CD8-positive, alpha-beta T cell (primary cell): ENCODE measurements at regions of chr3 and their contacts with region 1.

Region 1: GRCh38 chr3:58034738-58035523 is 26.7 kb downstream of the FLNB start:
- DNase-seq: peak in 7 of 9 experiments; percentile 8 to 92 (median 33)
- ATAC-seq: peak; percentile 95
- H3K4me3 ChIP-seq: no peak overlapping the region
- H3K4me3 Mint-ChIP-seq: peak overlapping the region; percentile 66
- H3K27ac ChIP-seq: peak overlapping the region; percentile 18 to 54
- H3K27ac Mint-ChIP-seq: peak overlapping the region; percentile 96
- H3K4me1 ChIP-seq: peaks cover 38% of the 10 kb centered on the region
- H3K4me1 Mint-ChIP-seq: peaks cover 62% of the 10 kb centered on the region
- H3K27me3 ChIP-seq: no peaks in the 10 kb centered on the region
- H3K27me3 Mint-ChIP-seq: no peaks in the 10 kb centered on the region
- CTCF ChIP-seq: no peak

Region 2: DNA sequence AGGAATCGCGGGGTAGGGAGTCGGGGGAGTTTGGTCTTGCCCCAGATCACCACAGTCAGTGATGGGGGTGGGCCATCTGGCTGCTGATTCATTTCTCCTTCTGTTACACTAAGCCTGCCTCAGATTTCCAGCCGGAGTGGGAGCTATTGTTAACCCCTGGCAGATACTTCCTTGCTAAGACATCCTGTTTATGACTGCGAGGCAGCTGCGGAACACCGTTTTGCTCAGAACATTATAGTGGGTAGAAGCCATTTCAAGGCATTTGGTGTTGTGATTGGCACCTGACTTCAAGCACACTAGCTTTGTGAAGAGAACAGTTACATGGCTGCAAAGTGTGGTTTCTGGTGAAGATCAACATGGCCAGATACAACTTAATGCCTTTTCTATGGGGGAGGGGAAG is 47.1 kb after region 1 on chr3:
- CTCF ChIA-PET with region 1: no interaction called
- POLR2A ChIA-PET with region 1: no interaction called
- intact Hi-C with region 1: loop called in 1 of 2 experiments (anchors 5 kb)
- DNase-seq: peak in 8 of 9 experiments; percentile 6 to 73 (median 26)
- ATAC-seq: peak; percentile 88
- H3K4me3 ChIP-seq: peak overlapping the region in 1 of 2 experiments; percentile 20
- H3K4me3 Mint-ChIP-seq: peak overlapping the region; percentile 66
- H3K27ac ChIP-seq: peak overlapping the region; percentile 22 to 32
- H3K27ac Mint-ChIP-seq: peak overlapping the region; percentile 92
- H3K4me1 ChIP-seq: peaks cover 65% of the 10 kb centered on the region
- H3K4me1 Mint-ChIP-seq: peaks cover 60% of the 10 kb centered on the region
- H3K27me3 ChIP-seq: no peaks in the 10 kb centered on the region
- H3K27me3 Mint-ChIP-seq: no peaks in the 10 kb centered on the region
- CTCF ChIP-seq: no peak